Endothelial cell of umbilical vein (primary cell): ENCODE measurements at regions of chr5 and their contacts with region 1.

Region 1: DNA sequence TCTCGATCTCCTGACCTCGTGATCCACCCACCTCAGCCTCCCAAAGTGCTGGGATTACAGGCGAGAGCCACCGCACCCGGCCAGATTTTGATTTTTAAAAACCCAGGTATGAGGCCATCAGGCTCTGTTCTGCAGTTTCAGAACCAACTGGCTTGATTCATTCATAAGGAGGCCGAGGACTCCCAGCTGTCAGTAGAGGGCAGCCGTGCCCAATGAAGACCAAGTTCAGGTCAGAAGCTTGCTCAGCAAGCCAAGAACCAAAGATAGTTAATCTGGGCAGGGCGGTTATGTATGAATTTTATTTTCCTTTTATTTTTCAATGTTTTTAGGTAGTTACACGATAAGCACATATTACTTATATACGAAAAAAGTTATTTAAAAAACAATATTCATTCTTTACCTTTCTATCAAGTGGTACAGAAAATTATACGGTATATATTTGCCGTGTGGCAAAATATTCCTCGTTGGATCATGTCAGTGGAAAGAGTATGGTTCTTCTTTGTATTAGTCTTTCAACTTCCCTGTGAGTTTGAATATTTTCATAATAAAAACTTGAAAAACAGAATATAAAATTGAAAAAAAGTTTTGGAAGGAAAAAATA is 18.0 kb downstream of the MGAT1 start:
- DNase-seq: peak; percentile 80
- H3K4me3 ChIP-seq: no peak overlapping the region
- H3K27ac ChIP-seq: no peak overlapping the region
- H3K4me1 ChIP-seq: peaks cover 34% of the 10 kb centered on the region
- H3K27me3 ChIP-seq: no peaks in the 10 kb centered on the region
- CTCF ChIP-seq: peak; percentile 74 to 75
- POLR2A ChIP-seq: no peak

Region 2: GRCh38 chr5:180802325-180803180 is 18.0 kb after region 1 on chr5 and contains the start of gene MGAT1:
- CTCF ChIA-PET with region 1: interaction called, 10 read pairs
- POLR2A ChIA-PET with region 1: interaction called, 3 read pairs
- dilution Hi-C with region 1: no loop called
- intact Hi-C with region 1: loop called (anchors 1 kb)
- DNase-seq: peak; percentile 87
- H3K4me3 ChIP-seq: peak within 1 kb of the TSS; percentile 46 to 98 (median 69)
- H3K27ac ChIP-seq: peak within 1 kb of the TSS; percentile 67
- H3K4me1 ChIP-seq: peaks cover 44% of the 10 kb centered on the region
- H3K27me3 ChIP-seq: no peaks in the 10 kb centered on the region
- CTCF ChIP-seq: no peak
- POLR2A ChIP-seq: peak; percentile 85
- total RNA-seq, gene MGAT1: 108 and 123 TPM in 2 replicates

Region 3: DNA sequence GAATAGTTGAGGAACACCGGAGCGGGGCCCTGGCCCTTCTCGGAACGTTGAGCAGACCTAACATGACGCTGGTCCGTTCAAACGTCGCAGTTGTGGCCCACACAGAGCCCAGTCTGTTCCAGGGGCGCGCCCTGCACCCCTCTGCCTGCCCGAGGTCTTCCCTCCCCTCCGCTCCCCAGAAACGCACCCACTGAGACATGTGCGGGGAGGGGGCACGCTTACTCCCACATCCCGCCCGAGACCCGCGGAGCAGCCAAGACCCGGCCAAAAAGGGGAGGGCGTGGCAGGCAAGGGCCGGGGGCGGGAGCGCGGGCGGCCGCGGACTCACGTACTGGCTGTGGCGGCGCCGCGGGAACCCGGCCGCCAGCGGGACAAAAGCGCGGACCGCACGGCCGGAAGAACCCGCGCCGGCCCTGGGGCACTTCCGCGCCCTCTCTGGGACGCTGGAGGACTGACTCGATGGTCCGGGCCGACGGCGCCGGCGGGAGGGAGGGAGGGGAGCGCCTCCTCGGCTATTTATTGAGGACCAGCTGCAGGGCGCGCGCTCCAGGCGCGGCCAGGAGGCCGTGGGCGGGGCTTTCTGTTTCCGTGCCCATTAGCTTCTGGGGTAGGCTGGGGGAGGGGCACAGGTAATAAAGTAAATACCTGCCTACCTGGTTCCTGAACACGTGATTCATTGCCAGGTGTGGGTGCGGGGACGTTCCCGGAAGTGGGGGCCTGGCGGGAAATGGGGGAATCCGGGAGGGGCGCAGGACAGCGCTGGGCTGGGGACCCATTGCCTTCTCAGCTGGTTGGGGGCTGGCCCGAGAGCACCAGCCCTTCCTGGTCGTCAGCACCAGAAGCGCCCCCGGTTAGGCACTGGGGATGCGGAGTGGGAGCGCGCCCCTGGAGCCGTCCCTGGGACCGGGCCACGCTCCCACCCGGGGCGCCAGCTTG is 76.6 kb after region 1 on chr5 and contains the start of gene ZFP62:
- CTCF ChIA-PET with region 1: interaction called, 14 read pairs
- POLR2A ChIA-PET with region 1: no interaction called
- dilution Hi-C with region 1: no loop called
- intact Hi-C with region 1: loop called (anchors 1 kb)
- DNase-seq: peak; percentile 90
- H3K4me3 ChIP-seq: peak within 1 kb of the TSS; percentile 44 to 79 (median 67)
- H3K27ac ChIP-seq: peak within 1 kb of the TSS; percentile 55
- H3K4me1 ChIP-seq: peaks cover 10% of the 10 kb centered on the region
- H3K27me3 ChIP-seq: no peaks in the 10 kb centered on the region
- CTCF ChIP-seq: no peak
- POLR2A ChIP-seq: peak; percentile 59
- total RNA-seq, gene ZFP62: 14.6 and 19.7 TPM in 2 replicates

Region 4: GRCh38 chr5:181052672-181053487 is 268.3 kb after region 1 on chr5:
- CTCF ChIA-PET with region 1: interaction called, 3 read pairs
- POLR2A ChIA-PET with region 1: no interaction called
- dilution Hi-C with region 1: no loop called
- intact Hi-C with region 1: loop called (anchors 5 kb)
- DNase-seq: no peak
- H3K4me3 ChIP-seq: peak overlapping the region; percentile 23 to 35 (median 35)
- H3K27ac ChIP-seq: no peak overlapping the region
- H3K4me1 ChIP-seq: peaks cover 3% of the 10 kb centered on the region
- H3K27me3 ChIP-seq: peaks cover 22 to 35% of the 10 kb centered on the region in 2 experiments
- CTCF ChIP-seq: no peak
- POLR2A ChIP-seq: no peak

Region 5: DNA sequence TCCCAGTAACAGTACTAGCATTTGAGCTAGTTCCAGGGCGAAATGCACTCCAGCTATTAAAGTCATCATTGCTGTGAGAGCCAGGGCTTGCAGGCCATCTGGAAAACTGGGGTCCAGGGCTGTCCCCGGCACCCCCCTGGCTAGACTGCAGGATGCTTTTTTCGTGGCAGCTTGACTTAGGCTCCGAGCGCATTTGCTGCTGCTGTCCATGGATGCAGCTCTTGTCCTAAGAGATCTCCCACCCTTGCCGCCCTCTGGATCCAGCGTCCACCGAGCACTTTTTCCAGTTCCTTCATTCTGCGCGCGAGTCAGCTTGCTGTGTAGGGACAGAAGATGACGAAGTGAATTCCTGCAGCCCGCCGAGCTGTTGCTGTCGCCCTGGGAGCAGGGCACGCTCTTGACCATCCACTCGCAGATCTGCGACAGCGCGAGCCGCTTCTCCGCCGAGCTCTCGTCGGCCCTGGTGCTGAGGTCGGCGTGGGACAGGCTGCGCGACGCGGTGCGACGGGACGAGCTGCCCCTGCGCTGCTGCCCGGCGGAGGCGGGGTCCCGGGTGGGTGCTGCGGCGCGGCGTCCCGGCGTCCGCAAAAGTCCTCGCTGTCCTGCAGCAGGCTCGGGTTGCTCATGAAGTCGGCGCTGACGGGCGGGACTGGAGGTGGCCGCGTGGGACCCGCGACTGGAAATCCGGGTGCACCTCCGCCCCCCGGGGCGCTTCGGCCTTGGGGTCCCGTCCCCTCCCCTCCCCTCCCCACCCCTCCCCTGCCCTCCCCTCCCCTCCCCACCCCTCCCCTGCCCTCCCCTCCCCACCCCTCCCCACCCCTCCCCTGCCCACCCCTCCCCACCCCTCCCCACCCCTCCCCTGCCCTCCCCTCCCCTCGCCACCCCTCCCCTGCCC is 315.8 kb after region 1 on chr5:
- CTCF ChIA-PET with region 1: interaction called, 10 read pairs
- POLR2A ChIA-PET with region 1: no interaction called
- dilution Hi-C with region 1: no loop called
- intact Hi-C with region 1: no loop called
- DNase-seq: peak; percentile 5
- H3K4me3 ChIP-seq: no peak overlapping the region
- H3K27ac ChIP-seq: no peak overlapping the region
- H3K4me1 ChIP-seq: no peaks in the 10 kb centered on the region
- H3K27me3 ChIP-seq: peaks cover 8 to 17% of the 10 kb centered on the region in 2 experiments
- CTCF ChIP-seq: no peak
- POLR2A ChIP-seq: no peak

Region 6: GRCh38 chr5:181167814-181168488 is 383.4 kb after region 1 on chr5:
- CTCF ChIA-PET with region 1: interaction called, 24 read pairs
- POLR2A ChIA-PET with region 1: no interaction called
- dilution Hi-C with region 1: no loop called
- intact Hi-C with region 1: loop called (anchors 1 kb)
- DNase-seq: no peak
- H3K4me3 ChIP-seq: no peak overlapping the region
- H3K27ac ChIP-seq: no peak overlapping the region
- H3K4me1 ChIP-seq: peaks cover 12% of the 10 kb centered on the region
- H3K27me3 ChIP-seq: peaks cover 21 to 33% of the 10 kb centered on the region in 2 experiments
- CTCF ChIP-seq: peak; percentile 45 to 47
- POLR2A ChIP-seq: no peak

Region 7: GRCh38 chr5:181181650-181182565 is 397.3 kb after region 1 on chr5:
- CTCF ChIA-PET with region 1: interaction called, 16 read pairs
- POLR2A ChIA-PET with region 1: no interaction called
- dilution Hi-C with region 1: no loop called
- intact Hi-C with region 1: loop called (anchors 1 kb)
- DNase-seq: peak; percentile 77
- H3K4me3 ChIP-seq: no peak overlapping the region
- H3K27ac ChIP-seq: no peak overlapping the region
- H3K4me1 ChIP-seq: no peaks in the 10 kb centered on the region
- H3K27me3 ChIP-seq: peaks cover 3 to 4% of the 10 kb centered on the region in 2 experiments
- CTCF ChIP-seq: peak; percentile 76 to 79
- POLR2A ChIP-seq: no peak